ENCODE measurements at regions of chr16 and their contacts with region 1.

Region 1: GRCh38 chr16:56600398-56600999 is 7.9 kb upstream of the MT2A start:
- DNase-seq: no peak
- H3K4me3 ChIP-seq: no peak overlapping the region
- H3K27ac ChIP-seq: no peak overlapping the region
- H3K4me1 ChIP-seq: no peaks in the 10 kb centered on the region
- H3K27me3 ChIP-seq: peaks cover 0 to under 1% (median 0%) of the 10 kb centered on the region in 4 experiments; a peak in 1 of 7 replicates
- CTCF ChIP-seq: peak; percentile 34 to 66 (median 58)
- EP300 ChIP-seq: no peak
- POLR2A ChIP-seq: no peak
- RAD21 ChIP-seq: peak; percentile 52 to 57

Region 2: DNA sequence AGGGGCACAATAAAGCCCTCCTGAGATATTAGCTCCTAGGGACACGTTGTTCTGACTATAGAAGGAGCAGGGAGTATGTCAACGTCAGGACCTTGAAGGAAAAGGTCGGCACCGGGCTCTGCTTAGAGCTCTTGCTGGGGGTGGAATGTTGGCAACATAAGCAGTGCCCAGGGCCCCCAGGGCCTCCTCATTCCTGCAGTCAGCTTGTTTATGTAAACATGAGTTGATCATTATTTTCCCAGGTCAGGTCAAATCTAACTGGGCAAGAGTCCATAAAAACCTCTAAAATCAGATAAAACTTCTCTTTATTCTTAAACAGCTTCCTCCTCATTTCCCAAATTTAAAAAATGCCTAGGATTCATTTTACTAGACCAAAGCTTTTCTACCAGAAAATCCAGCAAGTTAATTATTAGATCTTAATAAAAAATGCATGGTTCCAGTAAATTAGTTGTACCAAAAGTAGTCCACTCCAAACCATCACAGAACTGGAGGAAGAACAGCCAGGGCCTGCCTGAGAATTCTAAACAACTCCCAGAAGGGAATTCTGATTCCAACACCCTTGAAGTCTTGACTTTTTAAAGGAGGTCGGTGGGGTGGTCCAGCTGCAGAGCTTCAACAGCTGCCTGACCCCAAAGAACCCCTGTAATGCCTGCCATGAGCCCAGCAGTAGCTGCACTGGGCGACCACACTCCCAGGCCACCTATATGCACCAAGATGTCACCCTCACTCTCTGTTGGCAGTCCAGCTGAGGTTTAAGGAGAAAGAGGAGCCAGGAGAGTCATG is 229.4 kb before region 1 on chr16:
- CTCF ChIA-PET with region 1: no interaction called
- POLR2A ChIA-PET with region 1: no interaction called
- DNase-seq: no peak
- H3K4me3 ChIP-seq: no peak overlapping the region
- H3K27ac ChIP-seq: no peak overlapping the region
- H3K4me1 ChIP-seq: no peaks in the 10 kb centered on the region
- H3K27me3 ChIP-seq: no peaks in the 10 kb centered on the region
- CTCF ChIP-seq: no peak
- EP300 ChIP-seq: no peak
- POLR2A ChIP-seq: no peak
- RAD21 ChIP-seq: no peak

Region 3: DNA sequence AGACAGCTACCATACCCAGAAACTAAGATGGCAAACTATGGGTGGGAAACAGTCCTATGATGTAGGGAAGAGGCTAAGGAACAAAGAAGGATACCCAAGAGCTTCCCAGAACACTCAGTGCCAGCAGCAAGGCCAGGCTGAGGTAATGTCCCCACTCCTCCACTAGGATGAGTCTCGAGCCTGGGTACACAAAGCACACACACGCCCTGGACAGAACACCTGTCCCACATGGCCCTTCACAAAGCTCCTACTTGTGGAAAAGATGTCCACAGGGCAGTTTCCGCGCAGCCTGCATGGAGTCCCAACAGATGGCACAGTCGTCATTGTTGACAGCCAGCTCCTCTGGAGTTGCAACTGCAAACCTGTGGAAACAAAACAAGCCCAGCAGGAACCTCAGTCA is 199.0 kb before region 1 on chr16:
- CTCF ChIA-PET with region 1: no interaction called
- POLR2A ChIA-PET with region 1: no interaction called
- DNase-seq: peak in 1 of 2 experiments; percentile 51
- H3K4me3 ChIP-seq: no peak overlapping the region
- H3K27ac ChIP-seq: no peak overlapping the region
- H3K4me1 ChIP-seq: no peaks in the 10 kb centered on the region
- H3K27me3 ChIP-seq: no peaks in the 10 kb centered on the region
- CTCF ChIP-seq: peak; percentile 31 to 78 (median 77); a peak in 3 of 4 replicates
- EP300 ChIP-seq: no peak
- POLR2A ChIP-seq: no peak
- RAD21 ChIP-seq: peak; percentile 56

Region 4: GRCh38 chr16:56576585-56577293 is 23.8 kb before region 1 on chr16:
- CTCF ChIA-PET with region 1: interaction called, 39 read pairs
- POLR2A ChIA-PET with region 1: interaction called, 3 read pairs
- DNase-seq: peak; percentile 67 to 94
- H3K4me3 ChIP-seq: no peak overlapping the region
- H3K27ac ChIP-seq: no peak overlapping the region
- H3K4me1 ChIP-seq: no peaks in the 10 kb centered on the region
- H3K27me3 ChIP-seq: no peaks in the 10 kb centered on the region; a peak in 1 of 7 replicates
- CTCF ChIP-seq: peak; percentile 92 to 98 (median 93)
- EP300 ChIP-seq: 0 out of 3 replicates have a peak, but pooled peaks of 1 of the 2 experiments have one; percentile 8
- POLR2A ChIP-seq: no peak
- RAD21 ChIP-seq: peak; percentile 97 to 99

Region 5: GRCh38 chr16:56617177-56618085 is 16.9 kb after region 1 on chr16:
- CTCF ChIA-PET with region 1: interaction called, 12 read pairs
- POLR2A ChIA-PET with region 1: no interaction called
- DNase-seq: peak in 1 of 2 experiments; percentile 70
- H3K4me3 ChIP-seq: peak overlapping the region; percentile 34 to 57 (median 41)
- H3K27ac ChIP-seq: no peak overlapping the region
- H3K4me1 ChIP-seq: peaks cover 0 to 18% (median 12%) of the 10 kb centered on the region in 4 experiments; a peak in 6 of 7 replicates
- H3K27me3 ChIP-seq: peaks cover 35 to 74% (median 65%) of the 10 kb centered on the region in 4 experiments
- CTCF ChIP-seq: no peak
- EP300 ChIP-seq: no peak
- POLR2A ChIP-seq: no peak
- RAD21 ChIP-seq: no peak

Region 6: DNA sequence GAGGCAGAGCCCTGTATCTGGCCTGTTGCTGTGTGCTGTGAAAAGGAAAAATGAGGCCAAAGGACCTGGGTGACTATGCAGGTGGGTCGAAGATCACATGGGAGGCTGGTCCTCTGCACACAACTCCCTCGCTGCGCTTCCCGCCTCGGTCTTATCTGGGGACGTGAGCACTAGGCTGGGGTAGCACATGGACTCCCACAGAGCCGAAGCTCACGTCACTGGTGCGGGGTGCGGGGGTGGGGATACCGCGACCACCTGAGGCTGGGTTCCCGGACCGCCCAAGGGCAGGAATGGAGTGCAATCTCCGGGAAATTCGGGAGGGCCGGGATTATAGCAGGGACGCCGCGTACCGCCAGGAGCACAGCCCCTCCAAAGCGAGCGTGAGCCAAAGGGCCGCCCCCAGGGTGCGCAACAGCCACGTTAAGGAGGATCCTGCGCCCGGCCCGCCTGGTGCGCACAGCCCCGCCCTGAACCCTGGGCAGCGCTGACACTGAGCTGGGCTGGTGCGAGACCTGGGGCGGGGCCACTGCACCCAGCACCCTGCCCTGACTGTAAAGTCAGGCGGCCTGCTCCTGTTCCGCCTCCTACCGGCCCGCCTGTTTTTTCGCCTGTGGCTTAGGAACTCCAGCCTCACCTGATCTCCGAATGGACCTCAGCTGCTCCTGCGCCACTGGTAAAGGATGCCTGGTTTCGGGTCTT is 42.7 kb after region 1 on chr16:
- CTCF ChIA-PET with region 1: interaction called, 29 read pairs
- POLR2A ChIA-PET with region 1: no interaction called
- DNase-seq: peak in 1 of 2 experiments; percentile 67
- H3K4me3 ChIP-seq: peak overlapping the region; percentile 18 to 51 (median 34); a peak in 7 of 8 replicates
- H3K27ac ChIP-seq: no peak overlapping the region
- H3K4me1 ChIP-seq: peaks cover 3 to 20% (median 7%) of the 10 kb centered on the region in 4 experiments
- H3K27me3 ChIP-seq: peaks cover 84 to 100% (median 99%) of the 10 kb centered on the region in 4 experiments
- CTCF ChIP-seq: peak; percentile 39 to 50 (median 42)
- EP300 ChIP-seq: no peak
- POLR2A ChIP-seq: no peak
- RAD21 ChIP-seq: peak; percentile 32 to 36

Region 7: GRCh38 chr16:56673921-56674320 is 73.4 kb after region 1 on chr16:
- CTCF ChIA-PET with region 1: interaction called, 10 read pairs
- POLR2A ChIA-PET with region 1: no interaction called
- DNase-seq: no peak
- H3K4me3 ChIP-seq: no peak overlapping the region
- H3K27ac ChIP-seq: no peak overlapping the region
- H3K4me1 ChIP-seq: peaks cover 3 to 25% (median 15%) of the 10 kb centered on the region in 4 experiments
- H3K27me3 ChIP-seq: peaks cover 30 to 71% (median 52%) of the 10 kb centered on the region in 4 experiments
- CTCF ChIP-seq: peak; percentile 60 to 73 (median 64)
- EP300 ChIP-seq: no peak
- POLR2A ChIP-seq: no peak
- RAD21 ChIP-seq: peak; percentile 68 to 78

Region 8: GRCh38 chr16:56807011-56807675 is 206.6 kb after region 1 on chr16:
- CTCF ChIA-PET with region 1: no interaction called
- POLR2A ChIA-PET with region 1: no interaction called
- DNase-seq: no peak
- H3K4me3 ChIP-seq: no peak overlapping the region
- H3K27ac ChIP-seq: no peak overlapping the region
- H3K4me1 ChIP-seq: no peaks in the 10 kb centered on the region
- H3K27me3 ChIP-seq: no peaks in the 10 kb centered on the region
- CTCF ChIP-seq: no peak
- EP300 ChIP-seq: no peak
- POLR2A ChIP-seq: no peak
- RAD21 ChIP-seq: no peak

Region 9: DNA sequence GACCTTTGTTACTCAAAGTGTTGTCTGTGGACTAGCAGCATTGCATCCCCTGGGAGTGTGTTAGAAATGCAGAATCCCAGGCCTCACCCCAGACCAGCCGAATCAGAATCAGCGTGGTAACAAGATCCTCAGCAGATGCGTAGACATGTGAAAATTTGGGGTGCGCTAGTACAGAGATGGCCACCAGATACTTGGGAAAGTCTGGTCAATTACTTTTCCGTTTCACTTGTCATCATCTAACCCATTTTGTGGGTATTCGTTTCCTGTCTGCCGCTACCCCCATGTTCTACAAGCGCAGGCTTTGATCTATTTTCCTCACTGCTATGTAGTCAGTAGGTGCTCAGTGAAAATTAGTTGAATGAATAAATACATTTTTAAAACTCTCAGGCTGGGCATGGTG is 298.3 kb after region 1 on chr16:
- CTCF ChIA-PET with region 1: no interaction called
- POLR2A ChIA-PET with region 1: no interaction called
- DNase-seq: no peak
- H3K4me3 ChIP-seq: no peak overlapping the region
- H3K27ac ChIP-seq: no peak overlapping the region
- H3K4me1 ChIP-seq: peaks cover 0 to 3% (median 0%) of the 10 kb centered on the region in 4 experiments; a peak in 1 of 7 replicates
- H3K27me3 ChIP-seq: no peaks in the 10 kb centered on the region
- CTCF ChIP-seq: no peak
- EP300 ChIP-seq: no peak
- POLR2A ChIP-seq: no peak
- RAD21 ChIP-seq: no peak